HepG2 (cell line): ENCODE measurements at regions of chr22 and their contacts with region 1.

Region 1: DNA sequence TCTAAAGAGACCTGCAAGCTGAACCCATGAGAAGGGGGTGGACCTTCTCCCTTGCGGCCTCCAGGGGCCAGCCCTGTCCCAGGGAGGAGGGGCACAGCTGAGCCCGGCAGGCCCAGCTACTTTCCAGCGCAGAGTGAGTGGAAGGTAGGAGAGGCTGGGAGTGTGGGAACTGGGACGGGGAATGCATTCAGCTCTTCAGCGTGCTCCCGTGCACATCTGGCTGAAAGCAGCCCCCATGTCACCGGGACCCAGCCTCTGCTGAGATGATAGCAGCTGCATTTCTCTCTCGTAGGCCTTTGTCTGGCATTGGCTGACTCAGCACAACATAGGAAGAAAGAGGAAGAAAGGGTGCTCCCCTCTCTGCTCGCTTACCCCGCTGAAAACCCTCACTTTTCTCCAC is 951.5 kb downstream of the TBC1D22A start:
- DNase-seq: no peak
- ATAC-seq: no peak
- H3K4me3 ChIP-seq: no peak overlapping the region
- H3K27ac ChIP-seq: no peak overlapping the region
- H3K4me1 ChIP-seq: no peaks in the 10 kb centered on the region
- H3K27me3 ChIP-seq: peaks cover 0 to 6% of the 10 kb centered on the region in 2 experiments; a peak in 2 of 5 replicates
- CTCF ChIP-seq: no peak
- EP300 ChIP-seq: no peak
- POLR2A ChIP-seq: no peak
- RAD21 ChIP-seq: no peak

Region 2: GRCh38 chr22:47748957-47749356 is 35.0 kb after region 1 on chr22:
- CTCF ChIA-PET with region 1: no interaction called
- POLR2A ChIA-PET with region 1: no interaction called
- in situ Hi-C with region 1: no loop called
- intact Hi-C with region 1: loop called (anchors 2 kb)
- DNase-seq: no peak
- ATAC-seq: no peak
- H3K4me3 ChIP-seq: no peak overlapping the region
- H3K27ac ChIP-seq: no peak overlapping the region
- H3K4me1 ChIP-seq: no peaks in the 10 kb centered on the region
- H3K27me3 ChIP-seq: peaks cover 0 to 16% of the 10 kb centered on the region in 2 experiments; a peak in 3 of 5 replicates
- CTCF ChIP-seq: no peak
- EP300 ChIP-seq: no peak
- POLR2A ChIP-seq: no peak
- RAD21 ChIP-seq: no peak

Region 3: DNA sequence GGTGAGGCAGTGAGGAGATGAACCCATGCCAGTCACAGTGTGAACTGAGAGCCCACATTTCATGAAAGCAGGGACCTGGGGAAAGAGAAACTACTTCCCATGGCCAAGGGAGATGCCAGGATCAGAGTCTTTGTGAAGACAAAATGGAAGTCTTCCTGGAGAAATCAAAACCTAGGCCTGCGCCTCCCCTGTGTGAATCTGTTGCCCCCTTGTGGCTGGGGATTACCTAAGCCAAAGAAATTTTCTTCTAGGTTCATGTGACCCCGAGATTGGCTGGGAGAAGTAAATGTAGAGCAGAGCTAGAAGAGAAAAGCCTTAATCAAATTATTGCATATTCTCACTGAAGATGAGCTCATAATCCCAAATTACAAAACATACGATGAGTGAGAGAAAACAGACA is 123.8 kb after region 1 on chr22:
- CTCF ChIA-PET with region 1: no interaction called
- POLR2A ChIA-PET with region 1: no interaction called
- in situ Hi-C with region 1: no loop called
- intact Hi-C with region 1: no loop called
- DNase-seq: peak; percentile 30
- ATAC-seq: no peak
- H3K4me3 ChIP-seq: no peak overlapping the region
- H3K27ac ChIP-seq: no peak overlapping the region
- H3K4me1 ChIP-seq: no peaks in the 10 kb centered on the region
- H3K27me3 ChIP-seq: peaks cover 0 to 11% of the 10 kb centered on the region in 2 experiments; a peak in 1 of 5 replicates
- CTCF ChIP-seq: peak; percentile 50
- EP300 ChIP-seq: no peak
- POLR2A ChIP-seq: no peak
- RAD21 ChIP-seq: no peak